Caki2 (cell line): ENCODE measurements at regions of chr19 and their contacts with region 1.

Region 1: DNA sequence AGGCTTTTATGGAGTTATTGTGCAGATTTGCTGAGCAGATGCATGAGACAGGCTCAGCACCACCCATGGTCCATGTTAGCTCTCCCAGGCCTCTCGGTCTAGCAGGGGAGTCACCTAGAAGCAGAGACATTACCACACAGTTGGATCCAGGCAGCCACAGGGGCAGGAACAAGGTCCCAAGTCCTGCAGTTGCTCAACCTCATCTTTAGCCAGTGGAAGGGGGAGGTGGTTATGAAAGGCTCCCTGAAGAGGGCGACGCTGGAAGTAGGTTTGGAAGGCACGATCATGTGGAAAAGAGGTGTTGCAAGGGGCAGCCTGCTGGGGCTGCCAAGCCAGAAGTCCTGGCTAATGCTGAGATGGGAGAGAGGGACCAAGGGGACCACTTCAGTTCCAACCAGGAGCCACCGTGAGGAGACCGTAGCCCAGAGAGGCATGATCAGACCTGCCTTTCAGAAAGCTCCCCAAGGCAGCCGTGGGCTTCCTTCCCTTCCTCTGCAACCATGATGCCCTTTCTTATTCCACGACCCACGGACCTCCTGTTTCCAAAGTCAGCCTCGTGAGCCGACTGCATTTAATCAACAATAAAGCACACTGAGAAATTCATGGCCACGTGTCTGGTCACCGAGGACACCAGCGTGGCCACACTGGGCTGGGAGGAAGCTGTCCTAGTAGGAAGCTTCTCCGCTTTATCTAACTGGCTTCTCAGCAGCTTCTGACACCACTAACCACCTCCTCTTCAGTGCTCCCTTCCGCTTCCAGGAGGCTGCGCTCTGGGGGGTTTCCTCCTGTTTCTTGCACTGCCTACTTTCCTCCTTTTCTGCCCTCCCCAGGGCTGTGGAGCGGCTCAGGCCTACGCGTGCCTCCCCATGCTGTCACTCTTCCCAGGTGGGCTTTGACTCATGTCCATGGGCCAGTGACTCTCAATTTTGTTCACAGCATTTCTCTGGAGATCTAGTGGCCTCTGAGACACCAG is 2.6 kb downstream of the AP1M1 start:
- DNase-seq: no peak

Region 2: GRCh38 chr19:16371540-16371986 is 171.2 kb after region 1 on chr19:
- in situ Hi-C with region 1: loop called (anchors 25 kb)
- DNase-seq: no peak